ENCODE measurements at regions of chr14 and their contacts with region 1.

Region 1: GRCh38 chr14:54881235-54881760 is 21.3 kb downstream of the GCH1 start:
- DNase-seq: peak; percentile 87
- ATAC-seq: peak; percentile 77
- H3K4me3 ChIP-seq: peak overlapping the region; percentile 56
- H3K27ac ChIP-seq: peak overlapping the region; percentile 93
- H3K4me1 ChIP-seq: peaks cover 8% of the 10 kb centered on the region
- H3K27me3 ChIP-seq: no peaks in the 10 kb centered on the region
- CTCF ChIP-seq: peak in 1 of 3 experiments; percentile 18; a peak in 1 of 6 replicates
- EP300 ChIP-seq: no peak
- POLR2A ChIP-seq: no peak
- RAD21 ChIP-seq: no peak

Region 2: DNA sequence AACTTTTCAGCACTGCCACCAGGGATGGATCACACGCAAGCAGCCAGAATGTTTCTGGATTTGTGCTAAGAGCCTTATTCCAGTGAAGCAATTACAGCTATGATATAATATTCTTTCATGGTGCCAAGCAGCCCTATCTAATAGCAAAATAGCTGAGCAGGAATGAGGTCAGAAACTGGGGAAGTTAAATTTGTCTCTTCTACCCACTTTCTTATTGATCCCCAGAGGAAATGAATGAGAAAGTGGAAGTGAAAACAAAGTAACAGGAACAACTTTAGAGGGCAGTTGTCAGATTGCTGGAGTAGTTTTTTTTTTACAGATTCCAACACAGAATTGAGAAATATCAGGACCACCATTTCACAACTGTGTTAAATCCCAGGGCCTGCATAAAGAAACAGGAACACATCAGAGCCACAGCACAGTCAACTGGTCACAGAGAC is 23.4 kb before region 1 on chr14:
- CTCF ChIA-PET with region 1: interaction called, 13 read pairs
- POLR2A ChIA-PET with region 1: no interaction called
- RAD21 ChIA-PET with region 1: interaction called, 15 read pairs
- SMC1A ChIA-PET with region 1: interaction called, 8 read pairs
- in situ Hi-C with region 1: no loop called
- intact Hi-C with region 1: no loop called
- DNase-seq: peak; percentile 45
- ATAC-seq: peak; percentile 89
- H3K4me3 ChIP-seq: no peak overlapping the region
- H3K27ac ChIP-seq: no peak overlapping the region; the same call in 1 of the 2 replicates
- H3K4me1 ChIP-seq: peaks cover 18% of the 10 kb centered on the region
- H3K27me3 ChIP-seq: no peaks in the 10 kb centered on the region
- CTCF ChIP-seq: no peak
- EP300 ChIP-seq: no peak
- POLR2A ChIP-seq: no peak
- RAD21 ChIP-seq: no peak

Region 3: DNA sequence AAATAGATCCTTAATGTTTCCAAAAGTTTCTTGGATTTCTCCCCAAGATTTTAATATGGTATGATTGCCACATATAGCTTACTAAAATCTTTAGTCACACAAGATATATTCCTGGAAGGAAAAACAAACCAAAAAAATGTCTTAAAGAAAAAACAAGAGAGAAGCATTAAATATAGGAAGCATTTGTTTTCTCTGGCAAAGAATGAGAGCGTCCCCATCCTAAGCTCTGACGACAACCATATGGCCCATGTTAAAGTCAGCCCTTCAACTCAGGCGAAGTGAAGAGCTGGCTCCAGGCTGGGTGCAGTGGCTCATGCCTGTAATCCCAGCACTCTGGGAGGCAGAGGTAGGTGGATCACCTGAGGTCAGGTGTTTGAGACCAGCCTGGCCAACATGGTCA is 14.3 kb before region 1 on chr14:
- CTCF ChIA-PET with region 1: interaction called, 13 read pairs
- POLR2A ChIA-PET with region 1: interaction called, 6 read pairs
- RAD21 ChIA-PET with region 1: interaction called, 4 read pairs
- SMC1A ChIA-PET with region 1: interaction called, 7 read pairs
- in situ Hi-C with region 1: no loop called
- intact Hi-C with region 1: no loop called
- DNase-seq: no peak
- ATAC-seq: no peak
- H3K4me3 ChIP-seq: no peak overlapping the region
- H3K27ac ChIP-seq: no peak overlapping the region
- H3K4me1 ChIP-seq: no peaks in the 10 kb centered on the region
- H3K27me3 ChIP-seq: no peaks in the 10 kb centered on the region
- CTCF ChIP-seq: no peak
- EP300 ChIP-seq: no peak
- POLR2A ChIP-seq: no peak
- RAD21 ChIP-seq: no peak

Region 4: GRCh38 chr14:54893151-54893760 is 12.0 kb after region 1 on chr14:
- CTCF ChIA-PET with region 1: interaction called, 36 read pairs
- POLR2A ChIA-PET with region 1: interaction called, 9 read pairs
- RAD21 ChIA-PET with region 1: interaction called, 10 read pairs
- SMC1A ChIA-PET with region 1: interaction called, 35 read pairs
- in situ Hi-C with region 1: no loop called
- intact Hi-C with region 1: loop called (anchors 1 kb)
- DNase-seq: no peak
- ATAC-seq: peak; percentile 68
- H3K4me3 ChIP-seq: no peak overlapping the region
- H3K27ac ChIP-seq: no peak overlapping the region
- H3K4me1 ChIP-seq: peaks cover 25% of the 10 kb centered on the region
- H3K27me3 ChIP-seq: no peaks in the 10 kb centered on the region
- CTCF ChIP-seq: peak; percentile 55 to 78 (median 67)
- EP300 ChIP-seq: no peak
- POLR2A ChIP-seq: no peak
- RAD21 ChIP-seq: peak; percentile 53

Region 5: DNA sequence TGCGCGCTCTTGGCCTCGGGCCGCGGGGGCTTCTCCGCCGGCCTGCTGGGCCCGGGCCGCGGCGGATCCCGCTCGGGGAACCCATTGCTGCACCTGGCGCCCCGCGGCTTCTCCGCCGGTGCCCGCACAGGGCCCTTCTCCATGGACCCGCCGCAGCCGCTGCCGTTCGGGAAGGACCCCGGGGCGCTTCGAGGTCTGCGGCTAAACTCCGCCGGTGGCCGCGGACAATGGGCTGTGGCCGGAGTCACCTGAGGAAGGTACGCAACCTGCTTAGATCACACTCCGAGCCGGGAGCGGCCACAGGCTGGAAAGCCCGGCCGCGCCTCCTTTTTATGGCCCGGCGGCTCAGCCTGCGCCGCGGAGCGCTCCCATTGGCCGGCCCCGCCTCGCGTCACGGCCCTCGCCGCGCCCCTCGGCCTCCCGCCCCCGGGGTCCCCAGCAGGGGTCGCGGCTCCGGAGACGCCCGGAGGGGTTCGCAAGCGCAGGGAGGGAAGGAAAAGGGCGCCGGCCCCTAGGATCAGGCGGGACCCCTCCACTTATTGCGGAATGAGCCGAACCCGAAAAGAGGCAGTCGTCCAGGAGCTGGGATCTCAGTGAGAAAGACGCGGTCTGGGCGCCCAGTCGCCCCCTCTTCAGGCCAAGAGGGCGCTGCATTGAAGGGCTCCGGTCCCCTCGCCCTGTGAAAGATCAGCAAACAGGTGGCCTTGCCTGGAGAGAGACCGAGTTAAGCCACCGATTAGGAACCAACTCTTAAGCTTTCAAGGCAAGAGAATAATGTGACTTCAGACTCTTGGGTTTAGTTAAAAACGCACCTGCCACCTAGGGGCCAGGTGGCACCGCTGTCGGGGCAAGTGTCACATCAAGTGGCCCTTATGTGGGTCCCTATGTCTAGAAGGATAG is 21.5 kb after region 1 on chr14 and contains the start of gene GCH1:
- CTCF ChIA-PET with region 1: interaction called, 13 read pairs
- POLR2A ChIA-PET with region 1: interaction called, 3 read pairs
- RAD21 ChIA-PET with region 1: interaction called, 13 read pairs
- SMC1A ChIA-PET with region 1: interaction called, 12 read pairs
- in situ Hi-C with region 1: no loop called
- intact Hi-C with region 1: no loop called
- DNase-seq: no peak
- ATAC-seq: peak; percentile 90
- H3K4me3 ChIP-seq: peak within 1 kb of the TSS; percentile 73
- H3K27ac ChIP-seq: peak within 1 kb of the TSS; percentile 76
- H3K4me1 ChIP-seq: peaks cover 3% of the 10 kb centered on the region
- H3K27me3 ChIP-seq: no peaks in the 10 kb centered on the region
- CTCF ChIP-seq: peak; percentile 34 to 51 (median 45)
- EP300 ChIP-seq: no peak
- POLR2A ChIP-seq: peak; percentile 99
- RAD21 ChIP-seq: peak; percentile 30; the same call in 1 of the 2 replicates
- polyA plus RNA-seq, gene GCH1: 25.1 to 26.0 TPM

Region 6: DNA sequence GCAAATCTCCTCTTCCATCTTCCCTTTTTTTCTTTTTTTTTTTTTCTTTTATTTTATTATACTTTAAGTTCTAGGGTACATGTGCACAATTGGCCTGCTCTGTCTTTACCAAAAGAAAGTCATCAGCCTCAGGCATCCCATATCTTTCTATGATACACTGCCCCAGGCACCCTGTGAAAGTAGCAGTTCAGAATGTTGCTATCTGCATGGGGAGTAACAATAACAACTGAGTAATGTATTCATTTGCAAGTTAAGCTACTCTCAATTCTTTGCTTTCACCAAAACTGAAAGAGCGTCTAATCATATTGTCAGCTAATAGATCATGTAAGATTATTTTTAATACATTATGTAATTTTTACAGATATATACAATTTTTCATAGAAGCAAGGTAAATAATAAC is 34.8 kb after region 1 on chr14:
- CTCF ChIA-PET with region 1: no interaction called
- POLR2A ChIA-PET with region 1: no interaction called
- RAD21 ChIA-PET with region 1: no interaction called
- SMC1A ChIA-PET with region 1: no interaction called
- in situ Hi-C with region 1: no loop called
- intact Hi-C with region 1: no loop called
- DNase-seq: no peak
- ATAC-seq: no peak
- H3K4me3 ChIP-seq: no peak overlapping the region
- H3K27ac ChIP-seq: no peak overlapping the region
- H3K4me1 ChIP-seq: no peaks in the 10 kb centered on the region
- H3K27me3 ChIP-seq: no peaks in the 10 kb centered on the region
- CTCF ChIP-seq: no peak
- EP300 ChIP-seq: no peak
- POLR2A ChIP-seq: no peak
- RAD21 ChIP-seq: no peak

Region 7: GRCh38 chr14:55038708-55039107 is 157.4 kb after region 1 on chr14:
- CTCF ChIA-PET with region 1: no interaction called
- POLR2A ChIA-PET with region 1: no interaction called
- RAD21 ChIA-PET with region 1: no interaction called
- SMC1A ChIA-PET with region 1: no interaction called
- in situ Hi-C with region 1: no loop called
- intact Hi-C with region 1: no loop called
- DNase-seq: no peak
- ATAC-seq: peak; percentile 19; the same call in 1 of the 3 replicates
- H3K4me3 ChIP-seq: no peak overlapping the region
- H3K27ac ChIP-seq: no peak overlapping the region
- H3K4me1 ChIP-seq: no peaks in the 10 kb centered on the region
- H3K27me3 ChIP-seq: no peaks in the 10 kb centered on the region
- CTCF ChIP-seq: no peak
- EP300 ChIP-seq: no peak
- POLR2A ChIP-seq: no peak
- RAD21 ChIP-seq: no peak

Measured in GM12878 (cell line).